Caco-2 (cell line): ENCODE measurements at regions of chr15 and their contacts with region 1.

Region 1: DNA sequence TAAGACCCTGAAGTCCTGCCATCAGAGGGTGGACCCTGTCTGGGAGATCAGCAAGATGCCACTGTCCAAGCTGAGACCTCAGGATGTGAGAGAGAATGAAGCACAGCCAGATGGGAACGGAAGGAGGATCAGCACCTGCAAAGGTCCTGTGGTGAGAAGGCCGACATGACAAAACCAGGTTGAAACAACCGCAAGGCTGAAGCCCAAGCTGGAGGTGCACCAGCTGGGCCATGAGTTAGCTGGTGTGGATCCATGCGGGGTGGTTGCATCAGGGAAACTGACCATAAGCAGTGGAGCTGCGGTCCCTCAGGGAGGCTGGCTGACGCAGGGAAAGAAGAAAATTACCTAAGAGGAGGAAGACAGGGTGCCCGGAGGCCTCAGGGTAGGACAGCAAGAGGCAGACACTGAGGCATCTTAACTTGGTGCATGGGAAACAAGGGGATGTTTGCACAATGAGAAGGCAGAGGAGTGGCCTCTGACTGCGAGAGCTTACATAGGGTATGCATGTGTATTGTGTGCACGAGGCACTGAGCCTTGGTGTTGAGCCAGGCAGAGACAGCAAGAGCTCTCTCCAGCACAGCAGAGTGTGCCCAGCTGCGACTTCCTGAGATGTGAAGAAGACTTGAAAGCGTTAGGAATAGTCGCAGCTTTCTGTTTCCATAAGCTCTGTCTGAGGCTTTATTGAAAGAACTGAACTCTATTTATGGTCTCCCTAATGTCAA is 497.7 kb downstream of the OCA2 start:
- DNase-seq: no peak
- H3K4me3 ChIP-seq: no peak overlapping the region
- H3K4me3 Mint-ChIP-seq: no peak overlapping the region
- H3K27ac Mint-ChIP-seq: no peak overlapping the region
- H3K4me1 ChIP-seq: no peaks in the 10 kb centered on the region
- H3K4me1 Mint-ChIP-seq: no peaks in the 10 kb centered on the region
- H3K27me3 ChIP-seq: no peaks in the 10 kb centered on the region
- H3K27me3 Mint-ChIP-seq: no peaks in the 10 kb centered on the region
- CTCF ChIP-seq: no peak

Region 2: GRCh38 chr15:27097506-27097905 is 503.9 kb before region 1 on chr15:
- CTCF ChIA-PET with region 1: no interaction called
- POLR2A ChIA-PET with region 1: no interaction called
- intact Hi-C with region 1: no loop called
- DNase-seq: no peak
- H3K4me3 ChIP-seq: no peak overlapping the region
- H3K4me3 Mint-ChIP-seq: no peak overlapping the region
- H3K27ac Mint-ChIP-seq: no peak overlapping the region
- H3K4me1 ChIP-seq: no peaks in the 10 kb centered on the region
- H3K4me1 Mint-ChIP-seq: no peaks in the 10 kb centered on the region
- H3K27me3 ChIP-seq: no peaks in the 10 kb centered on the region
- H3K27me3 Mint-ChIP-seq: no peaks in the 10 kb centered on the region
- CTCF ChIP-seq: no peak

Region 3: GRCh38 chr15:27670486-27671209 is 69.2 kb after region 1 on chr15:
- CTCF ChIA-PET with region 1: no interaction called
- POLR2A ChIA-PET with region 1: no interaction called
- intact Hi-C with region 1: no loop called
- DNase-seq: no peak
- H3K4me3 ChIP-seq: no peak overlapping the region
- H3K4me3 Mint-ChIP-seq: no peak overlapping the region
- H3K27ac Mint-ChIP-seq: no peak overlapping the region
- H3K4me1 ChIP-seq: no peaks in the 10 kb centered on the region
- H3K4me1 Mint-ChIP-seq: no peaks in the 10 kb centered on the region
- H3K27me3 ChIP-seq: no peaks in the 10 kb centered on the region
- H3K27me3 Mint-ChIP-seq: peaks cover 6% of the 10 kb centered on the region
- CTCF ChIP-seq: no peak

Region 4: GRCh38 chr15:29018120-29018805 is 1416.9 kb after region 1 on chr15:
- CTCF ChIA-PET with region 1: interaction called, 10 read pairs
- POLR2A ChIA-PET with region 1: no interaction called
- intact Hi-C with region 1: no loop called
- DNase-seq: peak in 1 of 2 experiments; percentile 35
- H3K4me3 ChIP-seq: no peak overlapping the region
- H3K4me3 Mint-ChIP-seq: no peak overlapping the region
- H3K27ac Mint-ChIP-seq: no peak overlapping the region
- H3K4me1 ChIP-seq: no peaks in the 10 kb centered on the region
- H3K4me1 Mint-ChIP-seq: no peaks in the 10 kb centered on the region
- H3K27me3 ChIP-seq: no peaks in the 10 kb centered on the region
- H3K27me3 Mint-ChIP-seq: peaks cover 29% of the 10 kb centered on the region
- CTCF ChIP-seq: peak; percentile 44 to 48